ENCODE measurements at regions of chr11 and their contacts with region 1.

Region 1: DNA sequence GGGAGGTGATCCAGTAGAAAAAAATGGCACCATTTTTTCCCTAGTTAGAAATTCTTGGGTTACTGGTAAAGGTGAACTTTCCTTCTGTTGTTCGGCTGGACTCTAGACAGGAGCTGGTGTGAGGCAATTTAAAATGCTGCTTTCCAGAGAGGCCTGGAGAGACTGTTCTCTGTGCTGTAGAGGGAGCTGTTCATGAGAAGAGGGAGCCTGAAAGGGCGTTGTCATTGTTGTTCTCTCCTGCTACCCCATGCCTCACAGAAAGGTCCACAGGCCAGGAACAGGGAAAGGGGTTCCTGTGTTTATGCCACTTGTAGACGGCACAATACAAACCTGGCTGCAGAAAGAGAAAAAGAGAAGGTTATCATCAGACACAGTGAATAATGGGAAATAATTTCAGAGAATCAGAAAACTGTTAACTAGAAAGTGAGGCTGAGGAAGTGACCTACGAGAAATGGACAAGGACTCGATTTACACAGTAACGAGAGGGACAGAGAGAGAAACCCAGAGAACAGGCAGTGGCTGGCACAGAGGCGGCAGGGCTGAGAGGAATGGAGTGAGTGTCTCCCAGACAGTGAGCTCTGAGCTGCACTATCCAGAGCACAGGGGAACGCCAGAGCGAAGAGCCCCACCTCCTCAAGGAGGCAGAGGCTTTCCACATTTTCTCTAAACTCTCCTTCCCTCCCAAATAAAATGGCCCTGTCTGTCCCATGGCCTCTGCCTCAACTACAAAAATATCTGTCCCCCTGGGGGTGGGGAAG is 109.2 kb downstream of the RRM1 start:
- DNase-seq: no peak
- ATAC-seq: peak; percentile 64; the same call in 1 of the 2 replicates
- H3K4me3 ChIP-seq: no peak overlapping the region
- H3K27ac ChIP-seq: no peak overlapping the region
- H3K4me1 ChIP-seq: no peaks in the 10 kb centered on the region
- H3K27me3 ChIP-seq: peaks cover 3% of the 10 kb centered on the region; the same call in 1 of the 2 replicates
- CTCF ChIP-seq: peak; percentile 55

Region 2: DNA sequence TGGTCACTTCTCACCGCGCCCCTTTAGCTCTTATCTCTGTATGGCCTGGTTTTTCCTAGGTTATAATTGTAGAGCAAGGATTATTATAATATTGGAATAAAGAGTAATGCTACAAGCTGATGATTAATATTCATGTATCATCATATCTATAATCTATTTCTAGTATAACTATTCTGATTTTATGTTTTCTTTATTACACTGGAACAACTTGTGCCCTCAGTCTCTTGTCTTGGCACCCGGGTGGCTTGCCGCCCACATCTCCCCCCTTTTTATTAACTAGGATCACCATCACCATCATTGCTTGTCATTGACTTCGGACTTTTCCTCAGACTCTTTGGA is 289.7 kb after region 1 on chr11:
- CTCF ChIA-PET with region 1: interaction called, 10 read pairs
- POLR2A ChIA-PET with region 1: no interaction called
- in situ Hi-C with region 1: no loop called
- intact Hi-C with region 1: no loop called
- DNase-seq: no peak
- ATAC-seq: no peak
- H3K4me3 ChIP-seq: no peak overlapping the region
- H3K27ac ChIP-seq: no peak overlapping the region
- H3K4me1 ChIP-seq: no peaks in the 10 kb centered on the region
- H3K27me3 ChIP-seq: peaks cover 21% of the 10 kb centered on the region
- CTCF ChIP-seq: peak; percentile 74

Measured in Panc1 (cell line).